ENCODE measurements at regions of chr5 and their contacts with region 1.

Region 1: GRCh38 chr5:145237843-145238242 is 597.3 kb downstream of the PRELID2 start:
- DNase-seq: peak; percentile 90
- H3K4me3 ChIP-seq: no peak overlapping the region
- H3K27ac ChIP-seq: no peak overlapping the region
- H3K4me1 ChIP-seq: peaks cover 53% of the 10 kb centered on the region
- H3K27me3 ChIP-seq: no peaks in the 10 kb centered on the region
- CTCF ChIP-seq: peak; percentile 89

Region 2: DNA sequence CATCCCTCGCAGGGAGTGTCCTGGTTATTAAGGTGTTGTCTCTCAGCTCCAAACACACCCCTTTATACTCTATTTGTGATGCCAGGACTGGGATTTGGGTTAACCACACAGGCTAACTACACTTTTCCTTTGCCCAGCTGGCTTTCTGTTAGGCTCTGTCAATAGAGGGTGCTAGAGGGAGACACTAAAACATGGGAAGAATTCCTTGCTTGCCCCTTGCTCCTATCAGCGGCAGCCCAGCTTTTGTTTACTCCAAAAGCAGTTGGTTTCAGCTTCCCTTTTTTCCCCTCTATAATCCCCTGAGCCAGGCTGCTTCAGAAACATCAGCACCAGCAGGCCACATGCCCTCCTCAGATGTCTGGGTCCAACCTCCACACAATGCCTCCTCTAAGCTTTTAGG is 770.1 kb before region 1 on chr5:
- CTCF ChIA-PET with region 1: no interaction called
- POLR2A ChIA-PET with region 1: no interaction called
- intact Hi-C with region 1: loop called (anchors 5 kb)
- DNase-seq: peak; percentile 73
- H3K4me3 ChIP-seq: no peak overlapping the region
- H3K27ac ChIP-seq: no peak overlapping the region
- H3K4me1 ChIP-seq: peaks cover 14% of the 10 kb centered on the region
- H3K27me3 ChIP-seq: no peaks in the 10 kb centered on the region
- CTCF ChIP-seq: peak; percentile 76

Region 3: GRCh38 chr5:144487207-144487606 is 750.6 kb before region 1 on chr5:
- CTCF ChIA-PET with region 1: no interaction called
- POLR2A ChIA-PET with region 1: no interaction called
- intact Hi-C with region 1: loop called (anchors 5 kb)
- DNase-seq: peak; percentile 18
- H3K4me3 ChIP-seq: no peak overlapping the region
- H3K27ac ChIP-seq: no peak overlapping the region
- H3K4me1 ChIP-seq: no peaks in the 10 kb centered on the region
- H3K27me3 ChIP-seq: no peaks in the 10 kb centered on the region
- CTCF ChIP-seq: peak; percentile 47

Region 4: GRCh38 chr5:145316282-145316681 is 78.4 kb after region 1 on chr5:
- CTCF ChIA-PET with region 1: no interaction called
- POLR2A ChIA-PET with region 1: no interaction called
- intact Hi-C with region 1: no loop called
- DNase-seq: no peak
- H3K4me3 ChIP-seq: no peak overlapping the region
- H3K27ac ChIP-seq: no peak overlapping the region
- H3K4me1 ChIP-seq: no peaks in the 10 kb centered on the region
- H3K27me3 ChIP-seq: no peaks in the 10 kb centered on the region
- CTCF ChIP-seq: no peak